Posterior vena cava (tissue), 2 donors: ENCODE measurements at regions of chr4 and their contacts with region 1.

Region 1: GRCh38 chr4:38601244-38601897 is 62.6 kb upstream of the KLF3 start:
- DNase-seq: no peak

Region 2: DNA sequence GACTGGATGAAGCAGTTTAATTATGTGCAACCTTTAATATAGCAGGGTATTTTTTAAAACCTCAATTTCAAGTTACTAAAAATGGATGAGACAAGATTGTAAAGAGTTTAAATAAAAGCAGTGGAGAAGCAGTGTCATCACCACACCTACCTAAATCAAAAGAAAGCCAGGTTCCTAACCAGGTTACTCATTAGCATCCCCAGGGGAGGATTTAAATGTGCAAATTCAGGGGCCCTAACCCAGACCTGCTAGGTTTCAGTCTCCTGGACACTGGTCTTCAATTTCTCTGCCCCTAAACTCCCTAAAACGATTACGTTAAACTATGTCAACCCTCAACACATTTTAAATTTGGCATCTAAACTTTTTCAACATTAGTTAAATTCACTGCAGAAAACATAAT is 54.3 kb before region 1 on chr4:
- intact Hi-C with region 1: loop called in 1 of 2 experiments (anchors 2 kb)
- DNase-seq: no peak

Region 3: DNA sequence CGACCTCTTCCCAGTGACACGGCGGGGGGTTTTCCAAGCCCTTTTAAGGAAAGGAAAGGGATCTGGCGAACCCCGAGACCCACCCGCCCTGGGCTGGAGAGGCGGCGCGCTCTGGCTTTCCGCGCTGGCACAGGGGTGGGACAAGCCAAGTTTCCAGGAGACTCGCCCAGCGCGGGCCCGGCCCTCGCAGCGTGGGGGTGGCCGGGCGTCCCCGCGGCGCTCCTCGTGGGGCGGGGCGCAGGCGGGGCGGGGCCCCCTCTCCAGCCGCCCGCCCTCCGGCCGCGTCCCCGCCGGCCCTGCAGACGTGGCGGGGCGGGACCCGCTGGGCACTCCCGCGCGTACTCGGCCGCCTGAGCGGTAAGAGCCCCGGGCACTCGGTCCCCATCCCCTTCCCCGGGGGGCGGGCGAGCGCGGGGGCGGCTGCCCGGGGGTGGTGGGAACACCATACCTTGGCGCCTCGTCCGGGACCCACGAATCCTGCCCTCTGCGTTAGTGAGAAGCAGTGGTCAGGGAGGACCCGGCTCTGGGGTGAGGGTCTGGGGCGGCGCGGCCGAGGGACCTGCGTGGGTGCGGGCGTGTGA is 266.2 kb after region 1 on chr4 and contains the start of gene FAM114A1:
- intact Hi-C with region 1: no loop called
- DNase-seq: peak; percentile 95
- total RNA-seq, gene FAM114A1: 90.2 to 111 TPM

Region 4: GRCh38 chr4:39913471-39913870 is 1312.1 kb after region 1 on chr4:
- intact Hi-C with region 1: loop called in 1 of 2 experiments (anchors 5 kb)
- DNase-seq: no peak